ENCODE measurements at regions of chr13 and their contacts with region 1.

Region 1: DNA sequence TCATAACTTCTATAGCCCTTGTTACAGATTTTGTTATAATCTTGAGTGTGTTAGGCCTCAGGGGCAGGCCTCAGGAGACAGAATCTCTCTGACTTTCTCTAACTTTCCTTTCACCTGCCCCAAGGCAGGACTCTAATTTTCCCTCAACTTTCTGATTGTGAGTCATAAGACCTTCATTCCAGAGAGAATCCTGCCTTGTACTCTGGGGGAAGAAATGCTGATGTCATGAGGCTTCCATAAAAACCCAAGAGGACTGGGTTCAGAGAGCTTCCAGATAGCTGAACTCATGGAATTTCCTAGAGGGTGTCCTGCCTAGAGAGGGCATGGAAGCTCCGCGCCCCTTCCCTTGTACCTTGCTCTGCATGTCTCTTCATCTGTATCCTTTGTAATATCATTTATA is 5.3 kb upstream of the KBTBD6 start:
- DNase-seq: no peak
- H3K4me3 ChIP-seq: no peak overlapping the region
- H3K4me3 Mint-ChIP-seq: peak overlapping the region in 1 of 7 donors; percentile 17
- H3K27ac ChIP-seq: no peak overlapping the region
- H3K27ac Mint-ChIP-seq: no peak overlapping the region
- H3K4me1 ChIP-seq: peaks cover 9% of the 10 kb centered on the region
- H3K4me1 Mint-ChIP-seq: peaks cover 19 to 20% (median 20%) of the 10 kb centered on the region in 3 donors
- H3K27me3 ChIP-seq: no peaks in the 10 kb centered on the region
- H3K27me3 Mint-ChIP-seq: no peaks in the 10 kb centered on the region

Region 2: DNA sequence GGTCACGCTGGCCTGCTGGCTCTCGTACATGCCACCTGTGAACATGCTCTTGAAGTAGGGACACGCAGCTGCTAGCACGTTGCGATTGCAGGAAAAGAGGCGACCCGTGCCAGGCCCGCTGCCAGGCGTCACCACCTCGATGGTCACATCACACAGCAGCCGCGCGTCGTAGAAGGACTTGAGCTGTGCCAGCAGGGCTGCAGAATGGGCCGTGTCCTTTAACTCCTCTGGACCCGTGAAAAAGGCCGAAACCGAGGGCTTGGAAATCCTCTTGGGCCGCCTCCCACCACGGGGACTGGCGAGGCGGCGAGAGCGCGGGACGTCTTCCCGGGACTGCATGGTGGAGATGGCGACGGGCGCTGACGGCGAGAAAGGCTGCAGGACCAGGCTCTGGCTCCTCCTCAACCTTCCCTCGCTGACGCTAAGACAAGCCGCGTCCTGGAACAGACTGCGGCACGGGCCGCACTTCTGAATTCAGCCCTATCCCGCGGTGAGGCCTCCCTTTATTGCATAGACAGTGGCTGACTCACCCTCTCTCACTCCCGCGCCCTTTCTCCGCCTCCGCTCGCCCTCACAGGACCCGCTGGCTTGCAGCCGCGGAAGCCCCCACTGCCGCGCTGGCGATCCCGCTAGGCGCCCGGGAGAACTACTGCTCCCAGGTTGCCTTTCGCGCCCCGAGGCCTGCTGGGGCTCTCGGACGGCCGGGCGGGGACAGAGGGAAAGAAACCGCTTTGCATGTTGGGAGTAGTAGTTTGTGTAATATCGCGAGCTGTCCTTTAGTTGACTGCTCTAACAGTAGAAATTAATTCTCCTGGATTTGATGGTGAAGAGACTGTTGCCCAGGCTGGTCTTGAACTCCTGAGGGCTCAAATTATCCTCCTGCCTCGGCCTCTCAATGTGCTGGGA is 56.2 kb after region 1 on chr13 and contains the start of gene KBTBD7:
- CTCF ChIA-PET with region 1: no interaction called
- POLR2A ChIA-PET with region 1: interaction called, 11 read pairs
- DNase-seq: peak; percentile 83 to 92 (median 87)
- H3K4me3 ChIP-seq: peak within 1 kb of the TSS; percentile 80
- H3K4me3 Mint-ChIP-seq: peak within 1 kb of the TSS; percentile 94 to 98 (median 95)
- H3K27ac ChIP-seq: peak within 1 kb of the TSS; percentile 62
- H3K27ac Mint-ChIP-seq: peak within 1 kb of the TSS; percentile 64 to 95 (median 93)
- H3K4me1 ChIP-seq: peaks cover 13% of the 10 kb centered on the region
- H3K4me1 Mint-ChIP-seq: peaks cover 35 to 47% (median 45%) of the 10 kb centered on the region in 3 donors
- H3K27me3 ChIP-seq: no peaks in the 10 kb centered on the region
- H3K27me3 Mint-ChIP-seq: peaks cover 0 to 1% of the 10 kb centered on the region in 2 donors
- total RNA-seq, gene KBTBD7: 4.1 to 4.4 TPM